ENCODE measurements at regions of chr16 and their contacts with region 1.

Region 1: DNA sequence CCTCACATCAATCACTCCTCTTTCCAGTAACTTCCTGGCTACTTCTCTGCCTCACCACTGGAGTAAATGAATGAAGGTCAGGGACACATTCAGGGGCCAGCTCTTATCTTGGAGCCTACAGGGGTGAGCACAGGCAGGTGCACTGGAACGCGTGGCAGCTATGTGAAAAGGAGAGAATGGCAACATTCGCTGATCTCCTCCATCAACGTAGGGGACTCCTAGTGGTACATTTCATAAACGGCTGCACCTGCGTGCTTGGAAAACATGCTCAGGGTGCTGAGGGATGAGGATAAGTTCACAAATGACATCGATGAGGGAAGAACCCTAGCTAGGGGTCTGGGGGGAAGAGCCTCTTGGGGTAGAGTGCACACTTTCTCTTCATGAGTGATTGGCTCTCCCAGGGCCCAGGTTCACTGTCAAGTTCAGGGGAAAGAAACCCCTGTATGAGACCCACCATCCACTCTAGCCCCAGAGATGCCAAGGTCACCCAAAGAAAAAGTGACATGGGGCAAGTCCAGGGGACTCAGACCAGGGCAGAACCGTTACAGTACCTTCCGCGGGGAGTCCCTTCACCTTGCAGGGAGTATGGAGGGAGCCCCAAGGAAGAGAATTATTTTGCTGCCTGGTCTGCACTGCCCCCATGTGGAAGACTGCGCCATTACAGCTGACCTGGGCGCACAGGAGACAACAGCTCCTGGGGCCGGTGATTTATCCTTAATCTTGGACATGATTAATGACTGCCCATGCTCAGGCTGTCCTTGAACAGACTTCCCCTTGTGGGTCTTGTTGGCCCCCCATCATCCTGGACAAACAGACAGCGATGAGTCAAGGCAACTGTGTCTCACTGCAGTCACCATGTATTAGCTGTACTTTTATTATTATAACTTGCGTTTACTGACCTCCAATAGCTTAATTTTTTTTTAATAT is 30.1 kb downstream of the VAC14 start:
- DNase-seq: peak; percentile 75
- H3K4me3 Mint-ChIP-seq: no peak overlapping the region
- H3K27ac Mint-ChIP-seq: no peak overlapping the region
- H3K4me1 Mint-ChIP-seq: no peaks in the 10 kb centered on the region
- H3K27me3 Mint-ChIP-seq: no peaks in the 10 kb centered on the region

Region 2: GRCh38 chr16:70478912-70479341 is 292.0 kb before region 1 on chr16:
- CTCF ChIA-PET with region 1: no interaction called
- POLR2A ChIA-PET with region 1: no interaction called
- intact Hi-C with region 1: no loop called
- DNase-seq: no peak
- H3K4me3 Mint-ChIP-seq: no peak overlapping the region
- H3K27ac Mint-ChIP-seq: peak overlapping the region; percentile 28
- H3K4me1 Mint-ChIP-seq: peaks cover 25% of the 10 kb centered on the region
- H3K27me3 Mint-ChIP-seq: no peaks in the 10 kb centered on the region

Region 3: DNA sequence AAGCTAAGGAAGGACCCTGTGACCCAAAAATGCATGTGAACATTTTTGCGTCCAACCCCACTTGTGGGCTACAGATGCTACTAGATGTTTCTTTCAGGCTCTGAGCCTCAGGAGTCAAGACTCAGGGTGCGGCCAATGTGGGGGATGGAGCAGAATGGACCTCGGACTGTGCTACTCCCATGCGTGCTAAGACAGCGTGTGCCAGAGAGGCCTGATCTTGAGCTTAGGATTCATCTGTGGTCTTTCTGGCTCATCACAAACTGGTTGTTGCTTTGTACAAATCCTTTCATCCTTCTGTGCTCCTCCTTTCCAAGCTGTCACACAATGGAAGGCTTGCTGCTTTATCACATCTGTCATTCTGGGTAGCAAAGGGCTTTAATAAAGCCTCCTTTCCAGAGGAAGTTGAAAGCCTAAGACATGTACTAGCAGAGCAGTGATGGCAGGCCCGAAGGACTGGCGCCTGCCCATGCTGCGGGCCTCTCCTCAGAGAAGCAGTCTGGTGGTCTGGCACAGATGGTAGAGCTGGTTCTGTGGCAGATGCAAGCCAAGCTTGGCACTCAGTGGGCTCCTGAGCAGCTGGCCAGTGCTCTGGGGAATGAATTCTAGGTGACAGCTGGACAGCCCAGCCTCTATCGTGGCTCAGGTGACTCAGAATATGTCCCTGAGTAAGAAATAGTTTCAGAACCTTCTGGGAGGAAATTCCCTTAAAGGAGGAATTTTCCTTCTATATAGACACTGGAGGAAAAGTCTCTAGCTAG is 275.3 kb before region 1 on chr16:
- CTCF ChIA-PET with region 1: no interaction called
- POLR2A ChIA-PET with region 1: no interaction called
- intact Hi-C with region 1: no loop called
- DNase-seq: no peak
- H3K4me3 Mint-ChIP-seq: no peak overlapping the region
- H3K27ac Mint-ChIP-seq: no peak overlapping the region
- H3K4me1 Mint-ChIP-seq: peaks cover 26% of the 10 kb centered on the region
- H3K27me3 Mint-ChIP-seq: no peaks in the 10 kb centered on the region

Region 4: DNA sequence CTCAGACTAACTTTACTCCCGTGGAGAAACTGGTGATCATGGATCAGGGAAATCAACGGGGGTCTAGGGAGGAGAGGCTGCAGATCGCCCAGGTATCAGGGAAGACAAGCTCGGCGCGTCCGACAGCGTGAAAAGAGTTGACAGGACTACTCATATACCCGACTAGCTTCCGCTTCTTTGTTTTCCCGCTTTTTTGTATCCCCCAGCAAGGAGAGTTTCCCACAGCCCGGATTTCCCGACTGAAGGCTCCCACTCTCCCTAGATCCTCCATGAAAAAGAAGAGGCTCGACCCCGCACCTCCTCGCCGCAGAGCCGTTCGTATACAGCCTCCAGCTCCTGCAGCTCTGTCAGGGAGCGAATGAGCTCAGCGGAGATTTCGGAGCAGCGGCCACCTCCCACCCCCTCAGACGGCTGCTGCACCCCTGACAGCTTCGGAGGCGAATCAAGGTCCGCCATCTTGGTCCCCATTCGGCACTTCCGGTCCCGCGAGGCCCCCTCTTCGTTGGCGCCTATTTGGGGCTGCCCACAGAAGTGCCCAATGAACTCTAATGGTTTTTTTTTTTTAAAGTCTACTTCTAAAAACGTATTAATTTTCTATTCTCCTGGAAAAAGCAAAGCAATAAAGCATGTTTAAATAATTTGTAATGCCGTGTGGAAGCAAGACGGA is 247.7 kb before region 1 on chr16 and contains the start of gene COG4:
- CTCF ChIA-PET with region 1: no interaction called
- POLR2A ChIA-PET with region 1: no interaction called
- intact Hi-C with region 1: no loop called
- DNase-seq: peak; percentile 95
- H3K4me3 Mint-ChIP-seq: peak within 1 kb of the TSS; percentile 91
- H3K27ac Mint-ChIP-seq: peak within 1 kb of the TSS; percentile 98
- H3K4me1 Mint-ChIP-seq: peaks cover 48% of the 10 kb centered on the region
- H3K27me3 Mint-ChIP-seq: no peaks in the 10 kb centered on the region
- total RNA-seq, gene COG4: 35.9 to 40.2 TPM

Region 5: DNA sequence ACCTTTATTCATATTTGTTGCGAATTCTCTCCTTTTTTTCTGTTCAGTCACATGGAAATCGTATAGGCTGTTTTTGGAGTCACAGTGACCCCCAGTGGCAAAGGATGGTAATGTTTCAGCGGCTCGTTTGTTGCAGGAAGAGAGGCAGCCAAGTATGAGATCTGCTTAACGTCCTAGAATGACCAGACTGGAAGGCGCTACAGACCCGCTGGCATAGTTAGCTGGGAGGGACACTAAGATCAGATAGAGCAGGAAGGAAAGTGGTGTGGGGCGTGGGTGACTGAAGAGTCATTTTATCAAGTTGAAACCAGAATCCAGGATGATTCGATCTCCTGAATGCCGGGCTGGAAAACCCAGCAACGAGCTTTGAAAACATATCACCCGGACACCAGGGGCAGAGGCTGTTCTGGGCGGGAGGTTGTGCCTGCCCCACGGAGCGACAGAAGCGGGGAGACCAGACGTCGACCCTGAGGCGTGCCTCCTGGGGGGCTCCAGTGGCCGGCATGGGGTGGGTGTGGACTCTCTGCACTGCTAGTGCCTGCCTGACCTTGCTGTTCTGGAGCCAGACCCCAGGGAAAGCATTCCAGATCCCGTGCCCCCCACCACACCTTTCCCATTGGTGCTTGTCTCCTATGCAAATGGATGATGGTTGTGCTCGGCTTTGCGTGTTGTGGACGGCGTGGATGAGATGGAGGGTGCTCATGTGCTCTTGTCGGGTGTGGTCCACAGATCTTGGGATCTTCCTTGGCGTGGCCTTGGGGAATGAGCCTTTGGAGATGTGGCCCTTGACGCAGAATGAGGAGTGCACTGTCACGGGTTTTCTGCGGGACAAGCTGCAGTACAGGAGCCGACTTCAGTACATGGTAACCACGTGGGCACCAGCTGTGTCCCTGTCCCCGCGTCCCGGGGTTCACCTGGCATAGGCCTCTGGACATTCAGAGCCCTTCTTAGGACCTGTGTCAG is 116.8 kb before region 1 on chr16:
- CTCF ChIA-PET with region 1: interaction called, 15 read pairs
- POLR2A ChIA-PET with region 1: no interaction called
- intact Hi-C with region 1: no loop called
- DNase-seq: peak; percentile 89
- H3K4me3 Mint-ChIP-seq: no peak overlapping the region
- H3K27ac Mint-ChIP-seq: no peak overlapping the region
- H3K4me1 Mint-ChIP-seq: peaks cover 5% of the 10 kb centered on the region
- H3K27me3 Mint-ChIP-seq: peaks cover 1% of the 10 kb centered on the region

Region 6: DNA sequence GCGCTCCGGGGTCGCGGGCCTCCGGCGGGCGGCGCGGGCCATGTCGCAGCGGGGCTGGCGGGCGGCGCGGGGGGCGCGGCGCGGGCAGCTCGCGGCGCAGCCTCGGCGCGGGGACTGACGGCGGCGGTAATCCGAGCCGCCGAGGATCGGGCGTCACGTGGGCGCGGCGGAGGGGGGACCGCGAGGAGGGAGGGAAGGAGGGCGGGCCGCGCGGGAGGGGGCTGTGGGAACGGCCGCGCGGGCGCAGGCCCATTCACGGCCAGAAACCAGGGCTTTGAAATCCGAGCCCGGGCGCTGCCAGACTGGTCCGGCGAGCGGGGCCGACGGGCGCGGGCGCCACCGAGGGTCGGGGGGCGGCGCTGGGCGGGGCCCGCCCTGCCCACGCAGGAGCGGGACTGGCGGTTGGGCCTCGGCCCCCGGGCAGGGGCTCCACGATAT is 84.9 kb before region 1 on chr16 and contains the start of gene MTSS2:
- CTCF ChIA-PET with region 1: interaction called, 49 read pairs
- POLR2A ChIA-PET with region 1: no interaction called
- intact Hi-C with region 1: loop called (anchors 1 kb)
- DNase-seq: peak; percentile 21
- H3K4me3 Mint-ChIP-seq: peak within 1 kb of the TSS; percentile 39
- H3K27ac Mint-ChIP-seq: no peak within 1 kb of the TSS
- H3K4me1 Mint-ChIP-seq: peaks cover 2% of the 10 kb centered on the region
- H3K27me3 Mint-ChIP-seq: peaks cover 21% of the 10 kb centered on the region
- total RNA-seq, gene MTSS2: 0.29 to 1.1 TPM

Region 7: DNA sequence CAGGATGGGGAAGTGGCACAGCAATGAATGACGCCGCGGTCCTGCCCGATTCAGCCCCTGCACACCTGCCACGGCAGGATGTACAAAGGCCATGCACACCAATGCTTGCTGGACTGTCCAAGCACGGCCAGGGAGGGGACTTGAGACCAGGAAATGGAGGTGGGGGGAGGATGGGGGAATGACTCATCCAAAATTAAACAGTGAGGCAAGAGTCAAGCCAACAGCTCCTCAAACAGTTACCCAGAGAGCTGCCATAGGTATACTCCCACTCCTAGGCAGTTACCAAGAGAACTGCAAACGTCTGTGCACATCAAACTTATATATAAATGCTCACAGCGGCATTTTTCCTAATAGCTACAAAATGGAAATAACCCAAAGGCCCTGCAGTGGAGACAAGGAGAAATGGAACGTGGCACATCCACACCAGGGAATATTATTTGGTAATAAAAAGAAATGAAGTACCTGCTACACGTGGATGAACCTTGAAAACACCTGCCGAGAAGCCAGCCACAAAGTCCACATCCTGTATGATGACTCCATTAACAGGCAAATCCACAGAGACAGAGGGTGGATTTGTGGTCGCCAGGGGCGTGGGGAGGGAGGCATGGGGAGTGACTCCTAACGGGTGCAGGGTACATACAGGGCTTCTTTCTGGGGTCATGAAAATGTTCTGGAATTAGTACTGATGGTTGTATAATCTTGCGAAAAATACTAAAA is 24.0 kb before region 1 on chr16:
- CTCF ChIA-PET with region 1: interaction called, 15 read pairs
- POLR2A ChIA-PET with region 1: no interaction called
- intact Hi-C with region 1: no loop called
- DNase-seq: peak; percentile 71
- H3K4me3 Mint-ChIP-seq: no peak overlapping the region
- H3K27ac Mint-ChIP-seq: peak overlapping the region; percentile 72
- H3K4me1 Mint-ChIP-seq: peaks cover 41% of the 10 kb centered on the region
- H3K27me3 Mint-ChIP-seq: no peaks in the 10 kb centered on the region

Region 8: GRCh38 chr16:70800781-70801530 is 30.1 kb after region 1 on chr16 and contains the start of gene VAC14:
- CTCF ChIA-PET with region 1: interaction called, 12 read pairs
- POLR2A ChIA-PET with region 1: interaction called, 3 read pairs
- intact Hi-C with region 1: no loop called
- DNase-seq: peak; percentile 98
- H3K4me3 Mint-ChIP-seq: peak within 1 kb of the TSS; percentile 87
- H3K27ac Mint-ChIP-seq: peak within 1 kb of the TSS; percentile 60
- H3K4me1 Mint-ChIP-seq: peaks cover 30% of the 10 kb centered on the region
- H3K27me3 Mint-ChIP-seq: no peaks in the 10 kb centered on the region
- total RNA-seq, gene VAC14: 22.2 to 25.0 TPM